ENCODE measurements at regions of chr13 and their contacts with region 1.

Region 1: DNA sequence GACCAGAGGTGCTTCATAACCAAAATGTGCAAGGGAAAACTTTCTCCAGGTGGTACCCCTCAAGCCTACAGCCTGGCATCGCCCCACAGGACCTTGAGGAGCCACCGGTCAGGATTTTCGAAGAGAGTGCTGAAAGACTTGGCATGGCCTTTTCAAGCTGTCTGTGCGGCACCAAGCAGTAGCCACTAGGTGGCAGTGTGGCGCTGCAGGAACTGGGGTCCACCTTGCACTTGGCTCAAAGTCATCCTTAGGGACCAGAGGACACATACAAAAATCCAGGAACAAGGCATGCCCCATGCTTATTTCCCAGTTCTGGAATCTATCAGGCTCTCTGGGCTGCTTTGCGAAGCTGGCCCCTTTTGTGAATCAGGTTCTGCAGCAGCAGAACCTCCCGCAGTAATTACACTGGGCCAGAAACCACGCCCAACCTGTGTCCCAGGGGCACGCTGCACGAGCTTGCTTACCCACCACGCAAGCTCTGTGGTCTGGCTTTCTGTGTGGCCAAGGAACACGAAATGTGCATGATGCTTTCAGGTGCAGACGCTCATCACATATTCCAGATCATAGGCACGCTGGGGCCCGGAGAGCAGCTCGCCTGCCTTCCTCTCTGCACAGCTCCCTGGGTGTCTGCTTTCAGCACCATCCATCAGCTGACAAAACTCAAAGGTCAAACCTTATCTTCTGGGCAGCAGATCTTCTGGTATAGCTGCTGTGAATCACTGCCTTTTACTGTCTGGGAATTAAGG is 87.2 kb downstream of the SLC7A1 start:
- DNase-seq: peak; percentile 77 to 90 (median 88)
- ATAC-seq: peak; percentile 94
- H3K4me3 ChIP-seq: no peak overlapping the region
- H3K4me1 ChIP-seq: no peaks in the 10 kb centered on the region
- CTCF ChIP-seq: peak; percentile 94

Region 2: DNA sequence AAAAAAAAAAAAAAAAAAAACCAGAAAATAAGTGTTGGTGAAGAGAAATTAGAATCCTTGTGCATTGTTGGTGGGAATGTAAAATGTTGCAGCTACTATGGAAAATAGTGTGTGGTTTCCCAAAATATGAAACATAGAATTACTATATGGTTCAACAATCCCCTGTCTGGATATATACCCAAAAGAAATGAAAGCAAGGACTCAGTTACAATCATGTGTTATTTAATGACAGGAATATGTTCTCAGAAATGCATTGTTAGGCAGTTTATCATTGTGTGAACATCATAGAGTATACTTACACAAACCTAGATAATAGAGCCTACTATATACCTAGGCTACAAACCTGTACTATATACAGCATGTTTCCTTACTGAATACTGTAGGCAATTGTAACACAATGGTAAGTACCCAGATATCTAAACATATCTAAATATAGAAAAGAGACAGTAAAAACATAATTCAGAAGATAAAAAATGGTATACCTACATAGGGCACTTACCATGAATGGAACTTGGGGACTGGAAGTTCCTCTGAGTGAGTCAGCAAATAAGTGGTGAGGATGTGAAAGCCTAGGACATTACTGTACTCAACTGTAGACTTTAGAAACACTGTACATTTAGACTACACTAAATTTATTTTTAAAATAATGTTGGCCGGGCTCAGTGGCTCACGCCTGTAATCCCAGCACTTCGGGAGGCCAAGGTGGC is 112.9 kb after region 1 on chr13:
- intact Hi-C with region 1: no loop called
- DNase-seq: no peak
- ATAC-seq: no peak
- H3K4me3 ChIP-seq: no peak overlapping the region
- H3K4me1 ChIP-seq: no peaks in the 10 kb centered on the region
- CTCF ChIP-seq: no peak

Region 3: GRCh38 chr13:29713839-29714238 is 205.5 kb after region 1 on chr13:
- intact Hi-C with region 1: loop called in 1 of 2 experiments (anchors 10 kb)
- DNase-seq: no peak
- ATAC-seq: peak; percentile 57
- H3K4me3 ChIP-seq: no peak overlapping the region
- H3K4me1 ChIP-seq: no peaks in the 10 kb centered on the region
- CTCF ChIP-seq: peak; percentile 37

Region 4: GRCh38 chr13:30739761-30740642 is 1231.7 kb after region 1 on chr13:
- intact Hi-C with region 1: no loop called
- DNase-seq: no peak
- ATAC-seq: peak; percentile 26
- H3K4me3 ChIP-seq: no peak overlapping the region
- H3K4me1 ChIP-seq: peaks cover 16% of the 10 kb centered on the region
- CTCF ChIP-seq: no peak

Measured in mucosa of descending colon (tissue), 3 donors.